ENCODE measurements at regions of chr10 and their contacts with region 1.

Region 1: GRCh38 chr10:17910125-17910789 is 41.5 kb upstream of the SLC39A12 start:
- DNase-seq: peak; percentile 43
- ATAC-seq: no peak

Region 2: GRCh38 chr10:17836942-17837341 is 73.3 kb before region 1 on chr10:
- intact Hi-C with region 1: no loop called
- DNase-seq: peak; percentile 63
- ATAC-seq: peak; percentile 63 to 85

Region 3: GRCh38 chr10:17984056-17984455 is 73.8 kb after region 1 on chr10:
- intact Hi-C with region 1: no loop called
- DNase-seq: no peak
- ATAC-seq: no peak

Region 4: GRCh38 chr10:18104223-18104872 is 194.1 kb after region 1 on chr10:
- intact Hi-C with region 1: loop called in 1 of 2 experiments (anchors 5 kb)
- DNase-seq: peak; percentile 63
- ATAC-seq: no peak

Region 5: GRCh38 chr10:18140149-18140956 is 230.1 kb after region 1 on chr10 and contains the start of gene CACNB2:
- intact Hi-C with region 1: loop called in 1 of 2 experiments (anchors 2 kb)
- DNase-seq: peak; percentile 76
- ATAC-seq: peak; percentile 85 to 87
- total RNA-seq, gene CACNB2: 23.7 to 34.3 TPM

Measured in left cardiac atrium (tissue), 4 donors.